Aorta (tissue), 5 donors: ENCODE measurements at regions of chr17 and their contacts with region 1.

Region 1: DNA sequence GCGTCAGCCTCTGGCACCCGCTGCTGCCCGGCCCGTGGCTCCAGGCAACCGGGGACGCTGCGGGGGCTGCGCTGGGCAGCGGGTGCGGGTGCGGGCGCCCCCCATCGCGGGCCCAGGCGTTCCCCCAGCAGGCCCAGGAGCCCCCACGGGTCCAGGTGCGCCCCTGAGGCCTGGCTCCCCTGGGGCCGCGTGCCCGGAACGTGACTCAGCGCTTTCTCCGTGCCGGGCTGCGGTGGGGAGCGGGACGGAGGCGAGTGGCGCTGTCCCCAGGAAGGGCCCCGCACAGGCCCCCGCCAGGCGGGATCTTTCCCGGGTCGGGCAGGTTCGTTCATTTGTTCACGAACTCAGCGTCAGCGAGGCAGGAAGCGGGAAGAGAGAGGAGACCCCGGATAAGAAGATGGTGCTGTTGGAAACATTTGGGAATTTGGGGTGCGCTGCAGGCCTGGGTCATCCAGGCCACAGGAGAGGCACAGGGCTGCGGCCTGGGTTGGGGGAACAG is 18.4 kb upstream of the EXOC7 start:
- DNase-seq: peak in 1 of 2 donors; percentile 86
- ATAC-seq: peak; percentile 34
- H3K4me3 ChIP-seq: peak overlapping the region in 1 of 2 donors; percentile 15
- H3K27ac ChIP-seq: no peak overlapping the region
- H3K4me1 ChIP-seq: no peaks in the 10 kb centered on the region
- H3K27me3 ChIP-seq: no peaks in the 10 kb centered on the region

Region 2: GRCh38 chr17:75601057-75602051 is 520.6 kb before region 1 on chr17:
- intact Hi-C with region 1: no loop called
- DNase-seq: no peak
- ATAC-seq: peak; percentile 35
- H3K4me3 ChIP-seq: no peak overlapping the region
- H3K27ac ChIP-seq: no peak overlapping the region
- H3K4me1 ChIP-seq: no peaks in the 10 kb centered on the region
- H3K27me3 ChIP-seq: no peaks in the 10 kb centered on the region

Region 3: GRCh38 chr17:76147211-76148014 is 25.4 kb after region 1 on chr17:
- intact Hi-C with region 1: loop called in 1 of 2 experiments (anchors 2 kb)
- DNase-seq: peak in 1 of 2 donors; percentile 62
- ATAC-seq: no peak
- H3K4me3 ChIP-seq: no peak overlapping the region
- H3K27ac ChIP-seq: no peak overlapping the region
- H3K4me1 ChIP-seq: no peaks in the 10 kb centered on the region
- H3K27me3 ChIP-seq: no peaks in the 10 kb centered on the region

Region 4: GRCh38 chr17:76182016-76182764 is 60.2 kb after region 1 on chr17:
- intact Hi-C with region 1: loop called (anchors 2 to 5 kb)
- DNase-seq: peak; percentile 91 to 94
- ATAC-seq: peak; percentile 86
- H3K4me3 ChIP-seq: no peak overlapping the region
- H3K27ac ChIP-seq: no peak overlapping the region
- H3K4me1 ChIP-seq: no peaks in the 10 kb centered on the region
- H3K27me3 ChIP-seq: no peaks in the 10 kb centered on the region

Region 5: GRCh38 chr17:76278952-76279741 is 157.2 kb after region 1 on chr17:
- intact Hi-C with region 1: loop called (anchors 1 to 5 kb)
- DNase-seq: peak; percentile 90 to 96
- ATAC-seq: peak; percentile 87
- H3K4me3 ChIP-seq: no peak overlapping the region
- H3K27ac ChIP-seq: no peak overlapping the region
- H3K4me1 ChIP-seq: no peaks in the 10 kb centered on the region
- H3K27me3 ChIP-seq: no peaks in the 10 kb centered on the region

Region 6: GRCh38 chr17:76296186-76296585 is 174.2 kb after region 1 on chr17:
- intact Hi-C with region 1: loop called in 1 of 2 experiments (anchors 5 kb)
- DNase-seq: peak in 1 of 2 donors; percentile 26
- ATAC-seq: no peak
- H3K4me3 ChIP-seq: no peak overlapping the region
- H3K27ac ChIP-seq: no peak overlapping the region
- H3K4me1 ChIP-seq: no peaks in the 10 kb centered on the region
- H3K27me3 ChIP-seq: no peaks in the 10 kb centered on the region

Region 7: DNA sequence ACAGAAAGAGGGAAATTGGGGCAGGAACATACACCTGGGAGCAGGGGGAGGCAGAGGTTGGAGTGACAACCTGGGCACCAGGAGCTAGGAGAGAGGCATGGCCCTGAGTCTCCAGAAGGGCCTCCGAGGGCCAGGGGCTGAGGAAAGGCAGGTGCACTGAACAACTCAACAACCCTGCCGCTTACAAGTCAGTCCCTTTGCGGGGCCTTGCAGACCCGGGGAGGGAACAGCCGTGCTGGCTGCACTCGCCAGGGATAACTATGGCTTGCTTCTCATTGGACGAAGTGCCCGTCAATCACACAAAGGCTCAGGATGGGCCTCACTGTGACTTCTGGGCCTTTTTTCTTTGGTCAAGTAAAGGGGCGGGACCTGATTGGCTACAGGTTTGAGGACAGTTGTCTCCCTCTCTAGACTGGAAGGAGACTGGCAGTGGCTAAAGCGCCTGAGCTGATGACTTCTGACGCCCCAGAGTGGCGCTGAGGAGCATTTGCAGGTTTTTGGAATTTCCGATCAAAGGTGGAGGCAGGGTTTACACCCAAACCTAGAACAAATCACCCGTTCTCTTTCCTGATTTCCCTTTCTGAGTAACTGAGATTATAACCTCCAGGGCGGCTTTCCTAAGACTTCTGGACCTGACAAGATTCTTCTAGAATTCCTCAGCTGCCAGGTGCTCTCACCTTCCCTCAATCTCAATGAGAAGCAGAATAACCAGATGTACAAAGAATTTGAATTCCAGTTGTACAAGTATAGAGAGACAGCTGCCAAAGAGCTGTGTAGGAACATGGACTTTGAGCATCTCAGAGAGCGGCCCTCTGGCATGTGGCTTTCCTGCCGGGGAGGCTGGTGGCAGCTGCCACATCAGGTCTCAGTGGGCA is 491.2 kb after region 1 on chr17:
- intact Hi-C with region 1: no loop called
- DNase-seq: peak in 1 of 2 donors; percentile 61
- ATAC-seq: no peak
- H3K4me3 ChIP-seq: no peak overlapping the region
- H3K27ac ChIP-seq: no peak overlapping the region
- H3K4me1 ChIP-seq: no peaks in the 10 kb centered on the region
- H3K27me3 ChIP-seq: no peaks in the 10 kb centered on the region